ENCODE measurements at regions of chr16 and their contacts with region 1.

Region 1: GRCh38 chr16:67055712-67056487 is 27.0 kb downstream of the CBFB start:
- DNase-seq: peak; percentile 48
- CTCF ChIP-seq: no peak

Region 2: GRCh38 chr16:66947302-66948065 is 108.4 kb before region 1 on chr16:
- CTCF ChIA-PET with region 1: no interaction called
- POLR2A ChIA-PET with region 1: no interaction called
- DNase-seq: peak; percentile 89
- CTCF ChIP-seq: peak; percentile 90

Region 3: GRCh38 chr16:67043420-67043819 is 12.5 kb before region 1 on chr16:
- CTCF ChIA-PET with region 1: interaction called, 11 read pairs
- POLR2A ChIA-PET with region 1: no interaction called
- DNase-seq: no peak
- CTCF ChIP-seq: no peak